ENCODE measurements at regions of chr17 and their contacts with region 1.

Region 1: DNA sequence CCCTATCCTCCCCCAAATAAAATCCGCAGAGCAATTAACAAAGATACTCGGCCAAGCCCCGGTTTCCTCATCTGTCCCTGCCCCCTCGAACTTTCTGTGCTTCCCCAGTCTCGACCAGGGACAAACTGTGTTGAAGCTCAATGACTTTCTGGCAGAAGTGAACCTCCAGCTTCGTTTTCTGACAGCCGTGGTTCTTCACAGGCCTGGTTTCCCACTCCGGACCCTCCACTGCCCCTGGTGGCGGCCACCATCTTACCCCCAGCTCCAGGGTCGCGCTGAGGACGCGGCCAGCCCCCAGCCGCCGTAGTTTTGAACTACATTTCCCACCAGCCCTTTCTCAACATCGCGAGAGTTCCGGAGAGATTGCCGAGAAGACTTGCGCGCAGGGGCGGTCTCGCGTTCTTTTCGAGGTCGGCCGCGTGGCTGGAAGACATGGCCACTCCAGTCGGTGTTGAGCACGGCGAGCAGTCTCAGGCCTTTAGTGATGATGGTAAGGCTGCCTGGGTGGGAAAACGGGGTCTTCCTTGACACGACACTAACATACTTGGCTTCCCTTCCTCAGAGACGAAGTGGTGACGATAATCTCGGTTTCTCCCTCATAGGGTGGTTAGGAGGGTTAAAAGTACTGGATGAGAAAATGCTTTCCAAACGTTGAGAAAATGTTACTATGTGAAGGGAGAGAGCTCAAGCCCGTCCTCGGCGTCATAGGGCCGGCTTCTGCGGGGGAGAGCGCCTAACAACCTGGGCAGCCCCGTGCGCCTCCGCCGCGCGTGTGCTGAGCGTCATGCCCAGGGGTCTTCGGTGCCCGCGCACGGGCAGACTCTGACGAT is 17.7 kb downstream of the PRCD start:
- DNase-seq: peak; percentile 96
- ATAC-seq: peak; percentile 89
- H3K4me3 ChIP-seq: peak overlapping the region; percentile 49
- H3K27ac ChIP-seq: peak overlapping the region; percentile 84
- H3K4me1 ChIP-seq: peaks cover 19% of the 10 kb centered on the region
- H3K27me3 ChIP-seq: no peaks in the 10 kb centered on the region
- CTCF ChIP-seq: peak; percentile 69
- POLR2A ChIP-seq: peak; percentile 96
- RAD21 ChIP-seq: peak; percentile 52

Region 2: GRCh38 chr17:76623271-76624146 is 65.9 kb after region 1 on chr17:
- CTCF ChIA-PET with region 1: interaction called, 19 read pairs
- POLR2A ChIA-PET with region 1: no interaction called
- dilution Hi-C with region 1: no loop called
- in situ Hi-C with region 1: no loop called
- intact Hi-C with region 1: loop called (anchors 1 kb)
- DNase-seq: peak; percentile 60
- ATAC-seq: peak; percentile 100
- H3K4me3 ChIP-seq: no peak overlapping the region
- H3K27ac ChIP-seq: no peak overlapping the region
- H3K4me1 ChIP-seq: peaks cover 2% of the 10 kb centered on the region; the same call in 1 of the 2 replicates
- H3K27me3 ChIP-seq: peaks cover 17% of the 10 kb centered on the region
- CTCF ChIP-seq: peak; percentile 94
- POLR2A ChIP-seq: no peak
- RAD21 ChIP-seq: peak; percentile 92

Region 3: DNA sequence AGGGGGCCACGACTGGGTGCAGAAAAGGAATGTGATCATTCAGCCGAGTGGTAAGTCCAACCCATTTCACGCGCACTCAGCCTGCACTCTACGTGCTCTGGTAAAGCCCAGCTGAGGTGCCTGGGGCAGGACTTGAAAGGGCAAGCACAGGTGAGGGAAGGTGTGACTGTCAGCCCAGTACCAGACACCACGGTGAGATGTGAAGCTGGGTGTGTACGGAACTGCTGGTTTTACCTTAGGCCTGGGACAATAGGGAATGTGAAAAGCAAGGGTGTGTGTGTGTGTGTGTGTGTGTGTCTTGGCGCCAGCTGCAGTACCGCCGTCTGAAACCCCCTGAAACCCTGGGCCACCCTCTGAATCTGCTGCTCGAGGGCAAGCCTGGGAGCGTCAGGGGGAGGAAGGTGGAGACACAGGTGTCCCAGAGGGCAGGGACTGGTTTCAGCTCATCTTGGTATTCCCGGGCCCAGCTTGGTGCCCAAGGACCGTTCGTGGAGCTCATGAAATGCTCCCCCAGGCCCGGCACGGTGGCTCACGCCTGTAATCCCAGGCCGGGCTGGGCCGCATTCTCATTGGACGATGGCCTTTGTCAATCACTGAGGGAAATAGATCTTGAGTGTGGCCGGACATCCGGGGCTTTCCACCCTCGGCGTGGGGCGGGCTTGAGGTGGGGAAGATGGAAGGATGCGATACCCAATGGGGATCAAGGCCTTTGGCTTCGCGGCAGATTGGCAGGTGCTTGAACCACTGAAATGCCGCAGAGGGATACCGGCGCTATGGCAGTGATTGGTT is 113.7 kb after region 1 on chr17:
- CTCF ChIA-PET with region 1: no interaction called
- POLR2A ChIA-PET with region 1: no interaction called
- dilution Hi-C with region 1: no loop called
- in situ Hi-C with region 1: no loop called
- intact Hi-C with region 1: loop called (anchors 5 kb)
- DNase-seq: peak; percentile 100
- ATAC-seq: peak; percentile 97
- H3K4me3 ChIP-seq: peak overlapping the region; percentile 19
- H3K27ac ChIP-seq: peak overlapping the region; percentile 81
- H3K4me1 ChIP-seq: peaks cover 19% of the 10 kb centered on the region
- H3K27me3 ChIP-seq: no peaks in the 10 kb centered on the region
- CTCF ChIP-seq: no peak
- POLR2A ChIP-seq: no peak
- RAD21 ChIP-seq: no peak

Region 4: GRCh38 chr17:76714822-76715495 is 157.4 kb after region 1 on chr17:
- CTCF ChIA-PET with region 1: interaction called, 3 read pairs
- POLR2A ChIA-PET with region 1: no interaction called
- dilution Hi-C with region 1: no loop called
- in situ Hi-C with region 1: no loop called
- intact Hi-C with region 1: loop called (anchors 2 kb)
- DNase-seq: peak; percentile 59
- ATAC-seq: no peak
- H3K4me3 ChIP-seq: no peak overlapping the region
- H3K27ac ChIP-seq: peak overlapping the region; percentile 31; the same call in 1 of the 2 replicates
- H3K4me1 ChIP-seq: peaks cover 18% of the 10 kb centered on the region
- H3K27me3 ChIP-seq: no peaks in the 10 kb centered on the region
- CTCF ChIP-seq: peak; percentile 77
- POLR2A ChIP-seq: no peak; the same call in 1 of the 2 replicates
- RAD21 ChIP-seq: peak; percentile 65

Region 5: DNA sequence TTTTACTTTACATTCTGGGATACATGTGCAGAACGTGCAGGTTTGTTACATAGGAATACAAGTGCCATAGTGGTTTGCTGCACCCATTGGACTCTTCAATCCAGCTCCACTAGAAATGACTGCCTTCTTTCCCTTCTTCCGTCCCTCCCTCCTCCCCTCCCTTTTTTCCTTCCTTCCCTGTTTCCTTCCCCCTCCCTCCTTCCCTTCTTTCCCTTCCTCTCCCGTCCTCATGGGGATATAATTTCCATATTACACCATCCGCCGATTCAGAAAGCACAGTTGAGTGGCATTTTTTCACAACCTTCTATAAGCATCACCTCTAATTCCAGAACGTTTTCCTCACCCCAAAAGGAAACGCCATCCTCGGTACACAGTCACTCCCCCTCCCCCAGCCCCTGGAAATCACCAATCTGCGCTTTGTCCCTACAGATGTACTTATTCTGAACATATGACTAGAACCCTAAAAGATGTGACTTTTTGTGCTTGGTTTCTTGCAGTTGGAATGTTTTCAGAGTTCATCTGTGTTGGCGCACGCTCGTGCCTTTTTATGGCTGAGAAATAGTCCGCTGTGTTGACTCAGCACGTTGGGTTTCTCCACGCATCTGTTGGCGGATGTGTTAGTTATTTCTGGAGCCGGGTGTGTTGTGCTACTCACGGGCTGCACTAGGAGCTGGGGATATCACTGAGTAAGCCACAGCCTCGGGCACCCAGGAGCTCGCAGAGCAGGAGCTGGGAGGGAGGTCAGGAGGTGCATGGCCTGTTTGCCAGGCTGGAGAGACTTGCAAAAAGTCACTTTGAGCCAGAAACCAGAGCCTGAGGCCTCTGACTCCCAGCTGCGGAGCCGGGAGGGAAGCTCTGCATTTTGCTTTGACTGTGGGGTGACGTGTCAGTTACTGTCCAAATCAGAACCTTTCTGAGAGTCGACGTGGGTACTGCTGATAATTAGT is 919.6 kb after region 1 on chr17:
- CTCF ChIA-PET with region 1: no interaction called
- POLR2A ChIA-PET with region 1: no interaction called
- dilution Hi-C with region 1: no loop called
- in situ Hi-C with region 1: no loop called
- intact Hi-C with region 1: no loop called
- DNase-seq: peak; percentile 98
- ATAC-seq: peak; percentile 76
- H3K4me3 ChIP-seq: no peak overlapping the region
- H3K27ac ChIP-seq: peak overlapping the region; percentile 38
- H3K4me1 ChIP-seq: peaks cover 68% of the 10 kb centered on the region
- H3K27me3 ChIP-seq: no peaks in the 10 kb centered on the region
- CTCF ChIP-seq: no peak
- POLR2A ChIP-seq: no peak; the same call in 1 of the 2 replicates
- RAD21 ChIP-seq: peak; percentile 27

Measured in IMR-90 (cell line).